ENCODE measurements at regions of chr11 and their contacts with region 1.

Region 1: DNA sequence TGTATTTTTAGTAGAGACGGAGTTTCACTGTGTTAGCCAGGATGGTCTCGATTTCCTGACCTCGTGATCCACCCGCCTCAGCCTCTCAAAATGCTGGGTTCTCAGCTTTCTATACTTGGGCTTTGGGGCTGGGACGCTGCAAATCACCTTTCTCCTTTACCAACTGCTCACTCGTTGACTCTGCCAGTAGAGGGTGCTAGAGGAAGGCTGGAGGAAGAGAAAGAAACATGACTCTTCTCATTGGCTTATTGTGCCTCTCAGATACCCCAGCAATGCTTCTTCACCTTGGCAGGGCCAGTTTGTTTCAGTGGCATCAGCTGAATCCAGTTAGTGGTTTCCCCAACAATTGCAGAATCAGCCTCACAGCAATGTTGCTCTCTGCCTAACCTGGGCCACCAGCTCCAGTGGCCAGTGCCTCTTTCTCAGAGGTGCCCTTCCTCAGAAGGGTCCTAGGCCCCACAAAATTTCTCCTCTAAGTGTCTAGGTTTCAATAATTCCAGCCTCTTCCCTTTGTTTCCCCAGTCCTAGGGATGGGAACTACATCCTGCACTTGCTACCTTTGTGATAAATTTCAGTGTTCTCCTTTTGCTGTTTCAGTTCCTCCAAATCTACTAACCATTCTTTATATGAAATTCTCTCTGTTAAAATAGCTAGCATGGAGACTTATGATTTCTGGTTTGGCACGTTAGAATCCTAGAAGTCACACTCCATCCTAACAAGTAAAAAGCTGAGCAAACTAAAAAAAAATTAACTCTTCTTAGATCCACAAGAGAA is 71.5 kb upstream of the VSTM5 start:
- DNase-seq: peak; percentile 83
- H3K4me3 ChIP-seq: no peak overlapping the region
- H3K27ac ChIP-seq: no peak overlapping the region
- H3K4me1 ChIP-seq: no peaks in the 10 kb centered on the region
- H3K27me3 ChIP-seq: peaks cover 27% of the 10 kb centered on the region
- CTCF ChIP-seq: peak; percentile 86

Region 2: GRCh38 chr11:94046796-94047195 is 124.9 kb after region 1 on chr11:
- CTCF ChIA-PET with region 1: no interaction called
- POLR2A ChIA-PET with region 1: no interaction called
- intact Hi-C with region 1: no loop called
- DNase-seq: no peak
- H3K4me3 ChIP-seq: no peak overlapping the region
- H3K27ac ChIP-seq: no peak overlapping the region
- H3K4me1 ChIP-seq: no peaks in the 10 kb centered on the region
- H3K27me3 ChIP-seq: peaks cover 26% of the 10 kb centered on the region
- CTCF ChIP-seq: no peak

Region 3: DNA sequence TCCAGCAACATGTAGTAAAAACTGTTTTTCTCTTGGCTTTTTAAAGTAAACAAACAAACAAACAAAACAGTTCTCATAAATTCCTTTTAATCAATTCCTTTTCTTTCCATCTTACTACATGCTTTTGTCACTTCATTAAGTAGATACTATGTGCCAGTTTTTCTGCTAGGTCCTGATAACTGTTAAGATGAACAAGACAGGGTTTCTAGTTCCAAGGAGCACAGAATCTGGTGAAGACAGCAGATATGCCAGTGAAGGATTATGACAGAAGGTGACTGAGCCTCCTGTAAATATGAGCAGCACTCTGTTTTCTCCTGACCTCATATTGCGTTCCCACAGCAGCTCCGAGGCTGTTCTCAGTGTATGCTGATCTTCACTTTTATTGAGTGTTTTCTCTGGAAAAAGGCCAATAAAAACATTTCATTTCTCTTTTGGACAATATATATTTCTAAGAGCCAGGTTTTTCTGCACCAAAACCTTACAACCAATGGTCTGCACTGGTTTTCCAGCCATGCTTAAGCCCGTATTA is 145.1 kb after region 1 on chr11:
- CTCF ChIA-PET with region 1: no interaction called
- POLR2A ChIA-PET with region 1: no interaction called
- intact Hi-C with region 1: no loop called
- DNase-seq: no peak
- H3K4me3 ChIP-seq: no peak overlapping the region
- H3K27ac ChIP-seq: no peak overlapping the region
- H3K4me1 ChIP-seq: no peaks in the 10 kb centered on the region
- H3K27me3 ChIP-seq: peaks cover 45% of the 10 kb centered on the region
- CTCF ChIP-seq: no peak

Region 4: GRCh38 chr11:94107363-94107762 is 185.5 kb after region 1 on chr11:
- CTCF ChIA-PET with region 1: interaction called, 3 read pairs
- POLR2A ChIA-PET with region 1: no interaction called
- intact Hi-C with region 1: loop called (anchors 5 kb)
- DNase-seq: no peak
- H3K4me3 ChIP-seq: no peak overlapping the region
- H3K27ac ChIP-seq: no peak overlapping the region
- H3K4me1 ChIP-seq: no peaks in the 10 kb centered on the region
- H3K27me3 ChIP-seq: peaks cover 6% of the 10 kb centered on the region
- CTCF ChIP-seq: peak; percentile 46

Measured in A673 (cell line).